ENCODE measurements at regions of chr5 and their contacts with region 1.

Region 1: GRCh38 chr5:74919487-74919886 is 53.3 kb upstream of the FAM169A start:
- DNase-seq: no peak
- H3K4me3 ChIP-seq: no peak overlapping the region
- H3K27ac ChIP-seq: no peak overlapping the region
- H3K4me1 ChIP-seq: no peaks in the 10 kb centered on the region
- H3K27me3 ChIP-seq: no peaks in the 10 kb centered on the region
- CTCF ChIP-seq: peak; percentile 43 to 47

Region 2: GRCh38 chr5:74673011-74673790 is 246.3 kb before region 1 on chr5:
- intact Hi-C with region 1: loop called (anchors 5 kb)
- DNase-seq: no peak
- H3K4me3 ChIP-seq: peak overlapping the region; percentile 20 to 44
- H3K27ac ChIP-seq: peak overlapping the region; percentile 47 to 61
- H3K4me1 ChIP-seq: peaks cover 0 to 22% (median 12%) of the 10 kb centered on the region in 4 donors
- H3K27me3 ChIP-seq: no peaks in the 10 kb centered on the region
- CTCF ChIP-seq: peak; percentile 49 to 52